ENCODE measurements at regions of chr11 and their contacts with region 1.

Region 1: GRCh38 chr11:23957314-23957713 is 539.5 kb upstream of the LUZP2 start:
- DNase-seq: peak; percentile 65
- ATAC-seq: no peak
- H3K4me3 ChIP-seq: no peak overlapping the region
- H3K27ac ChIP-seq: no peak overlapping the region
- H3K4me1 ChIP-seq: peaks cover 6% of the 10 kb centered on the region; the same call in 1 of the 2 replicates
- H3K27me3 ChIP-seq: no peaks in the 10 kb centered on the region
- CTCF ChIP-seq: no peak
- POLR2A ChIP-seq: no peak
- RAD21 ChIP-seq: no peak

Region 2: GRCh38 chr11:23903044-23903704 is 54.1 kb before region 1 on chr11:
- CTCF ChIA-PET with region 1: interaction called, 4 read pairs
- POLR2A ChIA-PET with region 1: no interaction called
- dilution Hi-C with region 1: no loop called
- in situ Hi-C with region 1: no loop called
- intact Hi-C with region 1: loop called (anchors 5 kb)
- DNase-seq: peak; percentile 95
- ATAC-seq: peak; percentile 90
- H3K4me3 ChIP-seq: no peak overlapping the region
- H3K27ac ChIP-seq: peak overlapping the region; percentile 62
- H3K4me1 ChIP-seq: peaks cover 10% of the 10 kb centered on the region
- H3K27me3 ChIP-seq: no peaks in the 10 kb centered on the region
- CTCF ChIP-seq: no peak
- POLR2A ChIP-seq: no peak
- RAD21 ChIP-seq: peak; percentile 18; the same call in 1 of the 2 replicates

Region 3: GRCh38 chr11:24145411-24145810 is 188.1 kb after region 1 on chr11:
- CTCF ChIA-PET with region 1: interaction called, 10 read pairs
- POLR2A ChIA-PET with region 1: no interaction called
- dilution Hi-C with region 1: no loop called
- in situ Hi-C with region 1: no loop called
- intact Hi-C with region 1: no loop called
- DNase-seq: peak; percentile 2
- ATAC-seq: no peak
- H3K4me3 ChIP-seq: no peak overlapping the region
- H3K27ac ChIP-seq: no peak overlapping the region
- H3K4me1 ChIP-seq: no peaks in the 10 kb centered on the region
- H3K27me3 ChIP-seq: no peaks in the 10 kb centered on the region
- CTCF ChIP-seq: no peak
- POLR2A ChIP-seq: no peak
- RAD21 ChIP-seq: no peak

Region 4: GRCh38 chr11:24206030-24206429 is 248.7 kb after region 1 on chr11:
- CTCF ChIA-PET with region 1: no interaction called
- POLR2A ChIA-PET with region 1: no interaction called
- dilution Hi-C with region 1: no loop called
- in situ Hi-C with region 1: no loop called
- intact Hi-C with region 1: loop called (anchors 1 kb)
- DNase-seq: no peak
- ATAC-seq: no peak
- H3K4me3 ChIP-seq: no peak overlapping the region
- H3K27ac ChIP-seq: no peak overlapping the region
- H3K4me1 ChIP-seq: no peaks in the 10 kb centered on the region
- H3K27me3 ChIP-seq: no peaks in the 10 kb centered on the region
- CTCF ChIP-seq: no peak
- POLR2A ChIP-seq: no peak
- RAD21 ChIP-seq: no peak